Esophagus muscularis mucosa (tissue), 4 donors: ENCODE measurements at regions of chr3 and their contacts with region 1.

Region 1: GRCh38 chr3:41198950-41199865 is at the start of gene CTNNB1:
- DNase-seq: peak; percentile 98
- H3K4me3 ChIP-seq: peak within 1 kb of the TSS; percentile 91 to 98 (median 96)
- H3K27ac ChIP-seq: peak within 1 kb of the TSS; percentile 98 to 99 (median 98)
- H3K4me1 ChIP-seq: peaks cover 27 to 45% (median 37%) of the 10 kb centered on the region in 4 donors
- H3K27me3 ChIP-seq: no peaks in the 10 kb centered on the region
- CTCF ChIP-seq: peak in 2 of 3 experiments; percentile 16 to 19
- EP300 ChIP-seq: no peak
- POLR2A ChIP-seq: peak; percentile 92
- total RNA-seq, gene CTNNB1: 340 to 406 (median 367) TPM

Region 2: DNA sequence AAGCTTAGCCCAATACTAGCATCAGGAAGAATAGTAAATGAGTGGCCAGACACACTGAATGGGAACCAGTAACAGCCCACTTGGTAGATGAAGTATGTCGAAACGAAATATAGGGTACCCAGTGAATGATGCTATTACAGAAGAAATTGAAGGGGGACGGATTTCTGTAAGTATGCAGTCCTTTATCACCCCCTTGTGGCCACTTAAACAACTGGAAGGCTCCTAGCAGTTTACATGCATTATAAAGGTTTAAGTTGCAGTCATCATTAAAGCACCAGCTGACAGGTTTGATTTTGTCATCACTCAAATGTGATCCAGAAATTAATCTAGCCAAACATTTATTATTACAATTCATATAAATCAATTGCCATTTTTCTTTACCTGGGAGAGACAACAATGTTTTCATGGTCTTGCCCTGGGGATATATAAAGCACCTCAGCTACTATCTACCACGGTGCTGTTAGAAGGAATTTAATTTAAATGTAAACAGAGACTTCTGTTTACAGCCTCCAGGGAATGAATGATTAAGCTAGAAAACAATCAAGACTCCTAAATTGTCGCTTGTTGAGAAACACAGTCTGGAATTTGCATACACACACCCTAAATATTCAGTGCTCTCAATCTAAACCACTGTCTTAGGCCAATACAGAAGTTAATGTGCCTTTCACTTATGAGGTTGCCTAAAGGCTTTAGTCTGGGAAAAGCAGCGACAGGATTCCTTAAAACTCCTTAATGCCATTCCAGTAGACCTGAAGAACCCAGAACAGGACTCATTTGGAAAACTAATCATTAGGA is 882.0 kb before region 1 on chr3:
- intact Hi-C with region 1: loop called (anchors 10 kb)
- DNase-seq: no peak
- H3K4me3 ChIP-seq: no peak overlapping the region
- H3K27ac ChIP-seq: no peak overlapping the region
- H3K4me1 ChIP-seq: peaks cover 22 to 28% (median 23%) of the 10 kb centered on the region in 4 donors
- H3K27me3 ChIP-seq: no peaks in the 10 kb centered on the region
- CTCF ChIP-seq: peak; percentile 72 to 89 (median 82)
- EP300 ChIP-seq: no peak
- POLR2A ChIP-seq: no peak

Region 3: GRCh38 chr3:40719660-40720287 is 479.4 kb before region 1 on chr3:
- intact Hi-C with region 1: loop called (anchors 10 kb)
- DNase-seq: peak; percentile 86
- H3K4me3 ChIP-seq: no peak overlapping the region
- H3K27ac ChIP-seq: no peak overlapping the region
- H3K4me1 ChIP-seq: peaks cover 0 to 7% (median 2%) of the 10 kb centered on the region in 4 donors
- H3K27me3 ChIP-seq: no peaks in the 10 kb centered on the region
- CTCF ChIP-seq: peak; percentile 47 to 55 (median 49)
- EP300 ChIP-seq: no peak
- POLR2A ChIP-seq: no peak

Region 4: GRCh38 chr3:40951636-40952035 is 247.6 kb before region 1 on chr3:
- intact Hi-C with region 1: no loop called
- DNase-seq: no peak
- H3K4me3 ChIP-seq: no peak overlapping the region
- H3K27ac ChIP-seq: no peak overlapping the region
- H3K4me1 ChIP-seq: no peaks in the 10 kb centered on the region
- H3K27me3 ChIP-seq: no peaks in the 10 kb centered on the region
- CTCF ChIP-seq: no peak
- EP300 ChIP-seq: no peak
- POLR2A ChIP-seq: no peak

Region 5: GRCh38 chr3:40971191-40972168 is 227.7 kb before region 1 on chr3:
- intact Hi-C with region 1: loop called (anchors 5 kb)
- DNase-seq: no peak
- H3K4me3 ChIP-seq: no peak overlapping the region
- H3K27ac ChIP-seq: peak overlapping the region; percentile 65 to 82 (median 74)
- H3K4me1 ChIP-seq: peaks cover 61 to 66% (median 65%) of the 10 kb centered on the region in 4 donors
- H3K27me3 ChIP-seq: no peaks in the 10 kb centered on the region
- CTCF ChIP-seq: no peak
- EP300 ChIP-seq: peak; percentile 78
- POLR2A ChIP-seq: no peak